Activated CD4-positive, alpha-beta T cell treated with anti-CD3 and anti-CD28 coated beads, Interleukin-2, amount 10 ng/mL, durations not matched to agents 24 days and 14 days (primary cell): ENCODE measurements at regions of chr22 and their contacts with region 1.

Region 1: GRCh38 chr22:41682033-41682807 is 6.4 kb downstream of the SNU13 start:
- DNase-seq: peak; percentile 96
- H3K4me3 Mint-ChIP-seq: peak overlapping the region; percentile 96
- H3K27ac Mint-ChIP-seq: peak overlapping the region; percentile 96
- H3K4me1 Mint-ChIP-seq: peaks cover 10% of the 10 kb centered on the region
- H3K27me3 Mint-ChIP-seq: no peaks in the 10 kb centered on the region

Region 2: DNA sequence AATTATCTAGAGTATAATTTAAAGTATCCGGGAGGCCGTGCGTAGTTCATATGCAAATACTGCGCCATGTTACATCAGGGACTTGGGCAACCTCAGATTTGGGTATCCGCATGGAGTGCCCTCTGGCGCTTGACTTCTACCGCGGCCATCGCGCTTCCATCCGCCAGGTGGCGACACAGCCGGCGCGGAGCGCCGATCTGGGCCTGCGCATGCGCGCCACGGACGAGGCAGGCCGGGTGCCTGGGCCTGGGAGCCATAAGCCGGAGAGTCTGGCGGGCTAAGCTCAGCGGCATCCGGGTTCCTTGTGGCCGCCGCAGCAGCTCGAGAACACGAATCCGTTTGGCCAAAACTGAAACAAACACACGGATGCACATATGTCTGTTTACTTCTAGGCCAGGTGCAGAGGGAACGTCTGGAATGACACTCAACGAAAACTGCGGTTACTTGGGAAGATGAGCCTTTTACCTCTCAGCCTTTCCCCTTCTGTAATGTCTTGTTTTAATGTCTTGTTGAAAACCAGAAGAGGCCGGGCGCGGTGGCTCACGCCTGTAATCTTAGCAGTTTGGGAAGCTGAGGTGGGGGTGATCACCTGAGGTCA is 15.5 kb before region 1 on chr22:
- intact Hi-C with region 1: loop called (anchors 2 kb)
- DNase-seq: peak; percentile 99
- H3K4me3 Mint-ChIP-seq: peak overlapping the region; percentile 83
- H3K27ac Mint-ChIP-seq: peak overlapping the region; percentile 92
- H3K4me1 Mint-ChIP-seq: peaks cover 9% of the 10 kb centered on the region
- H3K27me3 Mint-ChIP-seq: no peaks in the 10 kb centered on the region

Region 3: GRCh38 chr22:41808400-41808799 is 126.2 kb after region 1 on chr22:
- intact Hi-C with region 1: no loop called
- DNase-seq: no peak
- H3K4me3 Mint-ChIP-seq: no peak overlapping the region
- H3K27ac Mint-ChIP-seq: no peak overlapping the region
- H3K4me1 Mint-ChIP-seq: peaks cover 14% of the 10 kb centered on the region
- H3K27me3 Mint-ChIP-seq: no peaks in the 10 kb centered on the region